ENCODE measurements at regions of chr6 and their contacts with region 1.

Region 1: DNA sequence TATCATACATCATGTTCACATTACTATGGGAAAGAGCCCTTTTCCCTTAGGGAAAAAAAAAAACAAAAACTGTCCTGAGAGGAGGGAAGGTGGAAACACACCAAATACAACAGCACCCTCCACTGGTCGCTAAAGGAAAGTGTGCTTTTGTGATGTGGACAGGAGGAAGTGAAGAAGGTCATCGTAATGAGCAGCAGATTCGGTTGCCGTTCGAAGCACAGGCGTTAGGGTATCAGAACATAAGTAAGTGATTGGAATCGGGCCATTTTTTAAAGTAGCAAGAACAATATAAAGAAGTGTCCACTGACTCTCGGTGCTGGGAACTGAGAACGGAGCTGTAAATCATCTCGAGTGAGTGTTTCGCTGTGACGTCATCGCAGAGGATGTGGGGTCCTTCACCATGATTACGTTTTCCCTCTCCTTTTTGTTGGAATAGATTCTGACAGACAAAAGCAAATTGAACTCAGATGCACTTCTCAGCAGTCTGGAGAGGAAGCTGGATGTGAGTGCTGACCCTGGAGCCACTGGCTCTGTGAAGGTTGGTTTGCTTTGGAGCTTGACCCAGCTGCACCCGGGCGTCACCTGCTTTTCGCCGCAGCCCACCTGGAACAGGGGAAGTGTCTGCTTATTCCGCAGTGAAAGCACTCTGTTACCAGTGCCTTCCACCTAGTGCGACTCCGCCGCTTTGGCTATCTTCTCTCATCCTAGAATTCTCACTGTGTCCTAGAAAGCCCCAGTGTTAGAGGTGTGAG is 203.6 kb upstream of the GMDS start:
- DNase-seq: peak; percentile 72
- ATAC-seq: peak; percentile 76
- H3K4me3 ChIP-seq: no peak overlapping the region
- H3K27ac ChIP-seq: no peak overlapping the region
- H3K4me1 ChIP-seq: peaks cover 19% of the 10 kb centered on the region
- H3K27me3 ChIP-seq: no peaks in the 10 kb centered on the region
- CTCF ChIP-seq: peak; percentile 87
- EP300 ChIP-seq: no peak
- POLR2A ChIP-seq: no peak
- RAD21 ChIP-seq: 0 out of 2 replicates have a peak, but pooled peaks have one; percentile 25

Region 2: GRCh38 chr6:1604158-1605030 is 844.6 kb before region 1 on chr6:
- CTCF ChIA-PET with region 1: interaction called, 3 read pairs
- POLR2A ChIA-PET with region 1: no interaction called
- in situ Hi-C with region 1: loop called (anchors 5 kb)
- intact Hi-C with region 1: loop called (anchors 2 kb)
- DNase-seq: peak; percentile 54
- ATAC-seq: peak; percentile 89
- H3K4me3 ChIP-seq: peak overlapping the region; percentile 44 to 77 (median 56)
- H3K27ac ChIP-seq: no peak overlapping the region
- H3K4me1 ChIP-seq: peaks cover 57% of the 10 kb centered on the region
- H3K27me3 ChIP-seq: peaks cover 32 to 97% of the 10 kb centered on the region in 2 experiments
- CTCF ChIP-seq: peak; percentile 92
- EP300 ChIP-seq: no peak
- POLR2A ChIP-seq: no peak
- RAD21 ChIP-seq: peak; percentile 99

Region 3: DNA sequence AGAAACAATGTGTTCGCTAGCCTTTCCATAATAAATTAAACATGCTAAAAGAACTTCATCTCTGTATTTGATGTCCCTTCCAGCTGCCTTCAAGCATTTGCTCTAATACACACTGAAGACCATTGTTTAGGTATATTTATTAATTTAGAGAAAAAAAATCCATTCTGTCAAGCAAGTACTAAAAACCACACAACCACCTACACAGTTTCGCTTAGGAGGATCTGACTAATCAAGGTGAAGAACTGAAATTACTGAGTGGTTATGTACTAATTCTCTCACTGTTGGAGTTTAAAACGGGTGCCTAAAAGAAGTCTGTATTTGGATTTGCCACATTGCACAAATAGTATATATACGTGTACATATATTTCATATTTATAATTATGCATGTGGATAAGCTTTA is 262.5 kb before region 1 on chr6:
- CTCF ChIA-PET with region 1: no interaction called
- POLR2A ChIA-PET with region 1: no interaction called
- in situ Hi-C with region 1: no loop called
- intact Hi-C with region 1: loop called (anchors 10 kb)
- DNase-seq: no peak
- ATAC-seq: no peak
- H3K4me3 ChIP-seq: no peak overlapping the region
- H3K27ac ChIP-seq: no peak overlapping the region
- H3K4me1 ChIP-seq: peaks cover 40% of the 10 kb centered on the region
- H3K27me3 ChIP-seq: no peaks in the 10 kb centered on the region
- CTCF ChIP-seq: no peak
- EP300 ChIP-seq: no peak
- POLR2A ChIP-seq: no peak
- RAD21 ChIP-seq: no peak

Region 4: GRCh38 chr6:2209226-2209809 is 239.7 kb before region 1 on chr6:
- CTCF ChIA-PET with region 1: no interaction called
- POLR2A ChIA-PET with region 1: no interaction called
- in situ Hi-C with region 1: loop called (anchors 10 kb)
- intact Hi-C with region 1: loop called (anchors 5 kb)
- DNase-seq: peak; percentile 72
- ATAC-seq: peak; percentile 99
- H3K4me3 ChIP-seq: no peak overlapping the region
- H3K27ac ChIP-seq: no peak overlapping the region
- H3K4me1 ChIP-seq: peaks cover 36% of the 10 kb centered on the region; the same call in 1 of the 2 replicates
- H3K27me3 ChIP-seq: no peaks in the 10 kb centered on the region
- CTCF ChIP-seq: peak; percentile 88
- EP300 ChIP-seq: 0 out of 4 replicates have a peak, but pooled peaks of 1 of the 2 experiments have one; percentile 12
- POLR2A ChIP-seq: no peak
- RAD21 ChIP-seq: peak; percentile 85

Region 5: GRCh38 chr6:2396846-2397630 is 52.0 kb before region 1 on chr6:
- CTCF ChIA-PET with region 1: no interaction called
- POLR2A ChIA-PET with region 1: no interaction called
- in situ Hi-C with region 1: no loop called
- intact Hi-C with region 1: no loop called
- DNase-seq: no peak
- ATAC-seq: no peak
- H3K4me3 ChIP-seq: no peak overlapping the region
- H3K27ac ChIP-seq: no peak overlapping the region
- H3K4me1 ChIP-seq: no peaks in the 10 kb centered on the region
- H3K27me3 ChIP-seq: no peaks in the 10 kb centered on the region
- CTCF ChIP-seq: no peak
- EP300 ChIP-seq: no peak
- POLR2A ChIP-seq: no peak
- RAD21 ChIP-seq: no peak

Region 6: DNA sequence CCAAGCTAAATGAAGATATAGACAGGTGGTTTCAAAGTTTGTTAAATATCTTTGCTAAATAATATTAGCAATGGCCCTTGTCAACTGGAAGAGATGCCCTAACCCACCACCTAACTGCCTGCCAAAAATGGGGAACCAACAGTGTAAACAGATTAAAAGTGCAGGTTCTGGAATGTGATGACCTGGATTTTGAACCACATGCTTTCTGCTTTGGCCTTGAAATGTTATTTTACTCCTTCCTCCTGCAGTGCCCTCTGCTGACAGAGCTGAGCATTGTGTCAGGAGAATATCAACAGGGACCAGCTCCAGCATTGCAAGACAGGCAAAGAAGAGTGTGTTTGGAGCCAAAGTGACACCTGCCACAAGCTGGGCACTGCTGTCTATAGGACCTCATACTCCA is 75.1 kb after region 1 on chr6:
- CTCF ChIA-PET with region 1: no interaction called
- POLR2A ChIA-PET with region 1: no interaction called
- in situ Hi-C with region 1: no loop called
- intact Hi-C with region 1: loop called (anchors 5 kb)
- DNase-seq: peak; percentile 82
- ATAC-seq: peak; percentile 85
- H3K4me3 ChIP-seq: no peak overlapping the region
- H3K27ac ChIP-seq: no peak overlapping the region
- H3K4me1 ChIP-seq: peaks cover 7% of the 10 kb centered on the region; the same call in 1 of the 2 replicates
- H3K27me3 ChIP-seq: no peaks in the 10 kb centered on the region
- CTCF ChIP-seq: peak; percentile 87
- EP300 ChIP-seq: peak in 1 of 2 experiments; percentile 46; a peak in 1 of 4 replicates
- POLR2A ChIP-seq: no peak
- RAD21 ChIP-seq: peak; percentile 59; the same call in 1 of the 2 replicates

Region 7: GRCh38 chr6:2634139-2634964 is 185.4 kb after region 1 on chr6:
- CTCF ChIA-PET with region 1: no interaction called
- POLR2A ChIA-PET with region 1: no interaction called
- in situ Hi-C with region 1: no loop called
- intact Hi-C with region 1: loop called (anchors 5 kb)
- DNase-seq: peak; percentile 51
- ATAC-seq: peak; percentile 93
- H3K4me3 ChIP-seq: peak overlapping the region; percentile 28 to 68 (median 32); a peak in 5 of 6 replicates
- H3K27ac ChIP-seq: no peak overlapping the region
- H3K4me1 ChIP-seq: peaks cover 31% of the 10 kb centered on the region
- H3K27me3 ChIP-seq: peaks cover 1 to 72% of the 10 kb centered on the region in 2 experiments
- CTCF ChIP-seq: peak; percentile 98
- EP300 ChIP-seq: no peak
- POLR2A ChIP-seq: no peak
- RAD21 ChIP-seq: peak; percentile 98